Common myeloid progenitor, CD34-positive (primary cell): ENCODE measurements at regions of chr12 and their contacts with region 1.

Region 1: DNA sequence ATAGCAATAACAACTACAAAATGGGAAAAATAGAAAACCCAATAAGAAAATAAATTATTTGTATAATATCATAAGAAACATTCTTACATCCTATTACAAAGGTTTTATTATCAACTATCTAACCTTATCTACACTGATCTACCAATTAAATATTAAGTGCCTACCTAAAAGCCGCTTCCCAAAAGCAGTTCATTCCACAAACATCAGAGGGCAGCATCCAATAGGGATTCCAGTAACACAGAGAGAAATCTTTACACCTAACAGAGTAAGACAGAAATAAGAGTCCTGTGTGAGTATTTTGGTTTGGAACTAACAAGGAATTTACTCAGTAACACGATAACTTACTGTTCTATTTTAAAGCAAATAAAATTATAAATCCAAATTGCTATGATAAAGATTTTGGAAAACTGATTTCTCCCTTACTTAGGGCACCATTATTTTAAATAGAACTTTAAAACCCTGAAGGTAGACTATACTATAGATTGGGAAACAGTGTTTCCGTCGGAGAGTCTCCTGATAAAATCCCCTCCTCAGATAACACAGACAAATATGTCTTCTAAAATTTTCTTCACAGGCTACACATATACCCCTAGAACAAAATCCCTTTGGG is 15.0 kb downstream of the GXYLT1 start:
- DNase-seq: peak; percentile 69 to 82 (median 81)
- H3K4me3 ChIP-seq: no peak overlapping the region
- H3K27ac ChIP-seq: no peak overlapping the region
- H3K4me1 ChIP-seq: peaks cover 4 to 19% (median 11%) of the 10 kb centered on the region in 4 experiments
- H3K27me3 ChIP-seq: no peaks in the 10 kb centered on the region

Region 2: GRCh38 chr12:42017051-42017450 is 112.6 kb before region 1 on chr12:
- CTCF ChIA-PET with region 1: no interaction called
- POLR2A ChIA-PET with region 1: no interaction called
- DNase-seq: peak; percentile 7 to 55 (median 52)
- H3K4me3 ChIP-seq: no peak overlapping the region
- H3K27ac ChIP-seq: no peak overlapping the region
- H3K4me1 ChIP-seq: peaks cover 0 to 22% (median 17%) of the 10 kb centered on the region in 4 experiments
- H3K27me3 ChIP-seq: no peaks in the 10 kb centered on the region

Region 3: DNA sequence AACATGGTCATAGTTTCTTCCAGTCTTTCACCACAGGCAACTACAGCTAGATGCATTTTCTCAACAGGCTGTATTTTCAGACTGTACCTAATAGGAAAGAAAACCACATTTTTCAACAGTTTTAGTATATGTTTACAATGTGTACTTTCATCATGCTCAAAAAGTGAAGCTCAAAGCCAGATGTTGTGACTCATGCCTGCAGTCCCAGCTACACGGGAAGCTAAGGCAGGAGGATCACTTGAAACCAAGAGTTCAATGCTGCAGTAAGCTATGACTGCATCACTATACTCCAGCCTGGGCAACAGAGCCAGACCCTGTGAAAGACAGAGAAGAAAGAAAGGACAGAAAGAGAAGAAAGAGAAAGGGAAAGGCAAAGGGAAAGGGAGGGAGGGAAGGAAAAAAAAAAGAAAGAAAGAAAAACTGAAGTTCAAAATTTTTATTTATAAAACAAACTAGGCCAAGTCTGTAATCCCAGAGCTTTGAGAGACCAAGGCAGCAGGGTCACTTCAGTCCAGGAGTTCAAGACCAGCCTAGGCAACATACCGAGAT is 10.5 kb before region 1 on chr12:
- CTCF ChIA-PET with region 1: interaction called, 12 read pairs
- POLR2A ChIA-PET with region 1: no interaction called
- DNase-seq: peak in 1 of 3 donors; percentile 20
- H3K4me3 ChIP-seq: no peak overlapping the region
- H3K27ac ChIP-seq: no peak overlapping the region
- H3K4me1 ChIP-seq: no peaks in the 10 kb centered on the region
- H3K27me3 ChIP-seq: no peaks in the 10 kb centered on the region

Region 4: DNA sequence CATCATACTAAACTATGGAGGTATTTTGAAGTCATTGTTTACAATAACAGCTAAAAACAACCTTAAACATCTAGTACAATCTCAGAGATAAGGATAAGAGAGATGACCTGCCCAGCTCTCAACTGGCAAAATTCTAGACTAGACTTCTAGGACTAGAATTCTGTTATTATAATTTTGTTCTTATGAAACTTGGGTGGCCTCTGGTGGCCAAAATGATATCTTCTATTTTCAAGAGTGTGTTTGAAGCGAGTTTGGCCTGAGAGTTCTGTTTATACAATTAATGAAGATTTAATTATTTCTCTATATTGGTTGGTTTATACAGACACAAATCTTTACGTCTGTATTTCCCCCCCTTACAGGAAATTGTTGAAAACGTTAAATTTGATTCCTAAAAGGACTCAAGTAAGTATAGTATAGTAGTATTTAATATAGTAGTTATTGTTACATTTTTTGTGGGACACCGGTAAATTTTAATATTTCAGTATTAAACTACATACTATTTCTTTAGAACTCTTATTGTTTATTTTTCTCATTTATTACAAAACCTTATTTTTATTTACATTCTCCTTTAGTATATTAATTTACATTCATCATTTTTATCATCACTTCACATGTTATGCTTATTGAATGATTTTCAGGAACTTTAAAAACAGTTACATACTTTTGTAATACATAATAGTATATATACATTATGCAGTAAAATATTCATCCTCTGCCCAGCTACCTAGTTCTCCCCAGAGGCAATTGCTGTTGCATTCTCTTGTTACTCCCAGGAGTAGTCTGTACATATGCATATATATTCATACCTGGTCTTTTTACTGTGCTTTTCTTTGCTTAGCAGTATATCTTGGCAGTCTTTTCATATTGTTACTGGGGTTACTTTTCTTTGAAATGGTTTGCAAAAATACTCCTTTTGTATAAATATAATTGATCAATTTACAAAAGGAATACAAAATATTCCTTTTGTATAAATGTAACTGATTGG is 202.9 kb after region 1 on chr12:
- CTCF ChIA-PET with region 1: interaction called, 20 read pairs
- POLR2A ChIA-PET with region 1: no interaction called
- DNase-seq: peak; percentile 59 to 78 (median 71)
- H3K4me3 ChIP-seq: no peak overlapping the region
- H3K27ac ChIP-seq: peak overlapping the region in 1 of 2 experiments; percentile 12
- H3K4me1 ChIP-seq: peaks cover 4 to 58% (median 19%) of the 10 kb centered on the region in 4 experiments
- H3K27me3 ChIP-seq: no peaks in the 10 kb centered on the region

Region 5: GRCh38 chr12:42372154-42372791 is 242.6 kb after region 1 on chr12:
- CTCF ChIA-PET with region 1: interaction called, 14 read pairs
- POLR2A ChIA-PET with region 1: no interaction called
- DNase-seq: peak; percentile 63 to 81 (median 79)
- H3K4me3 ChIP-seq: no peak overlapping the region
- H3K27ac ChIP-seq: no peak overlapping the region
- H3K4me1 ChIP-seq: no peaks in the 10 kb centered on the region
- H3K27me3 ChIP-seq: no peaks in the 10 kb centered on the region